ENCODE measurements at regions of chr2 and their contacts with region 1.

Region 1: GRCh38 chr2:186641807-186642321 is 52.0 kb upstream of the FAM171B start:
- DNase-seq: peak; percentile 28
- H3K4me3 ChIP-seq: no peak overlapping the region
- H3K27me3 ChIP-seq: no peaks in the 10 kb centered on the region
- CTCF ChIP-seq: peak; percentile 79

Region 2: GRCh38 chr2:186485871-186486650 is 155.8 kb before region 1 on chr2 and contains the start of gene ZC3H15:
- CTCF ChIA-PET with region 1: interaction called, 20 read pairs
- POLR2A ChIA-PET with region 1: no interaction called
- DNase-seq: peak; percentile 90
- H3K4me3 ChIP-seq: peak within 1 kb of the TSS; percentile 96
- H3K27me3 ChIP-seq: no peaks in the 10 kb centered on the region
- CTCF ChIP-seq: no peak
- polyA plus RNA-seq, gene ZC3H15: 26.5 and 54.6 TPM in 2 replicates

Region 3: DNA sequence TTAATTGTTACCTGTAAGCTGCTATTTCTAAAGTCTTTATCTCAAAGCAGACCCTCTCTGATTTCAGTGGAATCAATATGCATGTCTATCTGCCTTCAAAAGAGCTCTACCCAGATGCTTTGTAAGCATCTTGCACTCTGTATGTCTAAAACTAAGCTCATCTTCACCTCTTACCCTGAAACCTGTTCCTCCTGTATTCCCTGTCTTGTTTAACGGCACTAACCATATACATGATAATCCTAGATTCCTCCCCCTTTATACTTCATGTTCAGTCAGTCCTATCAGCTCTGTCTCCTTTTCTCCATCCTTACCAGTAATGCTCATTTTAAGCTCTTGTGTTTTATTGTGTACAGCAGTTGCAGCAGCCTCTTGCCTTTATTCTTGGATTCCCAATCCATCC is 143.0 kb before region 1 on chr2:
- CTCF ChIA-PET with region 1: interaction called, 102 read pairs
- POLR2A ChIA-PET with region 1: no interaction called
- DNase-seq: no peak
- H3K4me3 ChIP-seq: no peak overlapping the region
- H3K27me3 ChIP-seq: no peaks in the 10 kb centered on the region
- CTCF ChIP-seq: no peak

Region 4: DNA sequence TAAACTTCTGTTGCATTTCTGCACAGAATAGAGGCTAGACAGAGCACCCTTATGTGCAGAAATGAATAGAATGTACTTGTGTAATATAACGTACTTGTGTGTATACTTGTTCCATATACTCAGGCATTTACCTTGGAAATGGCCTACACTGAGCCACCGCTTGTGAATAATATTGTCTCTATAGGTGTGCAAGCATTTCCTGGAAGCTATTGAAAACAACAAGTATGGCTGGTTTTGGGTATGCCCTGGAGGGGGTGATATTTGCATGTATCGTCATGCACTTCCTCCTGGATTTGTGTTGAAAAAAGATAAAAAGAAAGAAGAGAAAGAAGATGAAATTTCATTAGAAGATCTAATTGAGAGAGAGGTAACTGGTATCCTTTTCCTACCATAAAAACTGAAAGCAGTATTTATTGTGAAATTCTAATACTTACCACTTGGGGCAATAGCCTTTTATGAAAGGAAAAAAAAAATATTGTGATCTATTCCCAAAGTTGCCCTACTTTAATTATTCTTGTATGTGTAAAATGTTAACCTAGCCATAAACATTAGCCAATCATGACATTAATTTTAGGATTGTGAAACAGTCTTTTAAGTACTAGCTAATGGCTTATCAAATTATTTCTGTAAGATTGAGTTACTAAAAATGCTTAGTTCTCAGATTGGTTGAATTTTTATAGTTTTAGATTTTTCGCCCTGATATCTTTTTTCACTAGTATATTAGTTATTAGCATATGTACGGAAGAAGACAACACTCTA is 137.8 kb before region 1 on chr2:
- CTCF ChIA-PET with region 1: interaction called, 102 read pairs
- POLR2A ChIA-PET with region 1: no interaction called
- DNase-seq: no peak
- H3K4me3 ChIP-seq: no peak overlapping the region
- H3K27me3 ChIP-seq: no peaks in the 10 kb centered on the region
- CTCF ChIP-seq: peak; percentile 44

Region 5: GRCh38 chr2:186518945-186519344 is 122.9 kb before region 1 on chr2:
- CTCF ChIA-PET with region 1: interaction called, 11 read pairs
- POLR2A ChIA-PET with region 1: no interaction called
- DNase-seq: no peak
- H3K4me3 ChIP-seq: no peak overlapping the region
- H3K27me3 ChIP-seq: no peaks in the 10 kb centered on the region
- CTCF ChIP-seq: no peak